ENCODE measurements at regions of chr2 and their contacts with region 1.

Region 1: GRCh38 chr2:8681786-8682692 is at the start of gene ID2:
- DNase-seq: peak; percentile 99
- H3K4me3 Mint-ChIP-seq: peak within 1 kb of the TSS; percentile 99
- H3K27ac Mint-ChIP-seq: peak within 1 kb of the TSS; percentile 97
- H3K4me1 Mint-ChIP-seq: peaks cover 41% of the 10 kb centered on the region
- H3K27me3 Mint-ChIP-seq: peaks cover 14% of the 10 kb centered on the region
- total RNA-seq, gene ID2: 301 and 306 TPM in 2 replicates

Region 2: GRCh38 chr2:7097348-7097895 is 1584.6 kb before region 1 on chr2:
- intact Hi-C with region 1: loop called (anchors 1 kb)
- DNase-seq: peak; percentile 56
- H3K4me3 Mint-ChIP-seq: peak overlapping the region; percentile 57
- H3K27ac Mint-ChIP-seq: peak overlapping the region; percentile 4
- H3K4me1 Mint-ChIP-seq: peaks cover 9% of the 10 kb centered on the region
- H3K27me3 Mint-ChIP-seq: no peaks in the 10 kb centered on the region

Region 3: GRCh38 chr2:7517088-7517487 is 1165.0 kb before region 1 on chr2:
- intact Hi-C with region 1: loop called (anchors 5 kb)
- DNase-seq: peak; percentile 13
- H3K4me3 Mint-ChIP-seq: peak overlapping the region; percentile 34
- H3K27ac Mint-ChIP-seq: peak overlapping the region; percentile 84
- H3K4me1 Mint-ChIP-seq: peaks cover 67% of the 10 kb centered on the region
- H3K27me3 Mint-ChIP-seq: no peaks in the 10 kb centered on the region

Region 4: GRCh38 chr2:7773362-7774360 is 908.4 kb before region 1 on chr2:
- intact Hi-C with region 1: loop called (anchors 1 kb)
- DNase-seq: peak; percentile 39
- H3K4me3 Mint-ChIP-seq: peak overlapping the region; percentile 28
- H3K27ac Mint-ChIP-seq: peak overlapping the region; percentile 91
- H3K4me1 Mint-ChIP-seq: peaks cover 41% of the 10 kb centered on the region
- H3K27me3 Mint-ChIP-seq: no peaks in the 10 kb centered on the region

Region 5: GRCh38 chr2:8049851-8050571 is 632.0 kb before region 1 on chr2:
- intact Hi-C with region 1: loop called (anchors 2 kb)
- DNase-seq: peak; percentile 52
- H3K4me3 Mint-ChIP-seq: peak overlapping the region; percentile 43
- H3K27ac Mint-ChIP-seq: peak overlapping the region; percentile 93
- H3K4me1 Mint-ChIP-seq: peaks cover 48% of the 10 kb centered on the region
- H3K27me3 Mint-ChIP-seq: no peaks in the 10 kb centered on the region

Region 6: DNA sequence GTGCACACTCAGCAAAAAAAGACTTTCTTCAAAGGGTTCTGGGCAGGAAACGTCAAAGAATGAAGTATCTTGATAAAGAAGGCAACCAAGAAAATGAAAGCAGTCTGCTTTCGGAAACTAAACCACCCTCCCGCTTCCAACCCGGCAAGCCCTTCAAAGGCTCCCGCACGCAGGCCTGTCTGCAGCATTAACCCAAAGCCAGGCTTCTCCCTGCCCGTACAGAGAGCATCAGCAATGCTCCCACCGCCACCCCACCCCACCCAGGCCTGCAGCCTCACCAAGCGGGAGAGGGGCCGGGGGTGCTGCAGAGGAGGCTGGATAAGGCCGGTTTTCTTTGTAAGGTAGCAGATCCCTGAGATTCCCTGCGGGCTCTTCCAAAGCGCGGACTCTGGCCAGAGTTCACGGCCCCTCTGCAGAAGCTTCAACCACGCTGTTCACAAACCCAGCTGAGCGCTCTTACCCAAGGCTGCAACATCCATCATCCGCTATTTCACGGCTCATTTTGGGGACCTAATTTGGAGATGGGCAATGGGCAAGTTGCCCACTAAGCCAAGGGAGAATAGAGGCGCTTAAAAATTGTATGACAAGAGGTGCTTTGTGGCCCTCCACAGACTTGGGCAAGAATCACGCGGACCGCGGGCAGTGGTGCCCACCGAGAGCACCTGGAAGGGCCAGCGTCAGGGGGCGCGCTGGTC is 225.7 kb before region 1 on chr2:
- intact Hi-C with region 1: loop called (anchors 2 kb)
- DNase-seq: peak; percentile 58
- H3K4me3 Mint-ChIP-seq: peak overlapping the region; percentile 66
- H3K27ac Mint-ChIP-seq: peak overlapping the region; percentile 88
- H3K4me1 Mint-ChIP-seq: peaks cover 56% of the 10 kb centered on the region
- H3K27me3 Mint-ChIP-seq: peaks cover 22% of the 10 kb centered on the region

Region 7: GRCh38 chr2:8761529-8762164 is 79.6 kb after region 1 on chr2:
- intact Hi-C with region 1: loop called (anchors 2 kb)
- DNase-seq: no peak
- H3K4me3 Mint-ChIP-seq: no peak overlapping the region
- H3K27ac Mint-ChIP-seq: no peak overlapping the region
- H3K4me1 Mint-ChIP-seq: no peaks in the 10 kb centered on the region
- H3K27me3 Mint-ChIP-seq: no peaks in the 10 kb centered on the region

Measured in activated T-helper 1 cell treated with anti-CD3 and anti-CD28 coated beads, Interleukin-12 subunit alpha, Interleukin-12 subunit beta, Interleukin-2, Interleukin-4 antibody, amounts not matched to agents 30 ng/mL and 10 ng/mL and 1 ng/mL, durations not matched to agents 14 hours and 24 hours and 36 hours (primary cell).